ENCODE measurements at regions of chr6 and their contacts with region 1.

Region 1: DNA sequence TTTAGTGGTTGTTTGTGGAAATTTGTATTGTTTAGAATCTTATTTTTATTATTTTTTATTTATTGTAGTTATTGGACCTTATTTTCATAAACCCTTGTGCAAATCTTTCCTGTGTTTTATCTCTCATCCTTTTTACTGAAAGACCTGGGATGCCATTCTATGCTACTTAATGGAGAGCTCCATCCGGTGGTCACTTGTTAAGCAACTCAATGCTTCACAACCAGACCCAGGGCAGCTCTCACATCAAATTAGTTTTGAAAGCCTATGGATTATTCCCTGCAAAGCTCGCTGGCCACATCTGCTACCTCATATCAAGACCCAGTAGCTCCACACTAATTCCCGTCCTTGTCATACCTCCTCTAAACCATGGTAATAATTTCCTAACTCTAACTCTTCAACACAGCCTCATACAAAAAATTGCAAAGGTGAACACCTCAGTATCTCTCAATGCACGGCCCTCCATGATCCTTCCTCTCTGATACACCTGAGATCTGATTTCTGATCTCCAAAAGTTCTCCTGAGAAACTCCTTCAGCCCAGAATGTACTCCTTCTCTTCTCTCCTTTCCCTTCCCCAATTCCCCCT is 296.6 kb upstream of the MANEA start:
- H3K4me3 ChIP-seq: no peak overlapping the region
- H3K27ac ChIP-seq: no peak overlapping the region
- H3K4me1 ChIP-seq: no peaks in the 10 kb centered on the region
- CTCF ChIP-seq: no peak

Region 2: GRCh38 chr6:95203153-95203754 is 77.5 kb before region 1 on chr6:
- CTCF ChIA-PET with region 1: interaction called, 11 read pairs
- POLR2A ChIA-PET with region 1: no interaction called
- H3K4me3 ChIP-seq: no peak overlapping the region
- H3K27ac ChIP-seq: no peak overlapping the region
- H3K4me1 ChIP-seq: no peaks in the 10 kb centered on the region
- CTCF ChIP-seq: no peak

Region 3: DNA sequence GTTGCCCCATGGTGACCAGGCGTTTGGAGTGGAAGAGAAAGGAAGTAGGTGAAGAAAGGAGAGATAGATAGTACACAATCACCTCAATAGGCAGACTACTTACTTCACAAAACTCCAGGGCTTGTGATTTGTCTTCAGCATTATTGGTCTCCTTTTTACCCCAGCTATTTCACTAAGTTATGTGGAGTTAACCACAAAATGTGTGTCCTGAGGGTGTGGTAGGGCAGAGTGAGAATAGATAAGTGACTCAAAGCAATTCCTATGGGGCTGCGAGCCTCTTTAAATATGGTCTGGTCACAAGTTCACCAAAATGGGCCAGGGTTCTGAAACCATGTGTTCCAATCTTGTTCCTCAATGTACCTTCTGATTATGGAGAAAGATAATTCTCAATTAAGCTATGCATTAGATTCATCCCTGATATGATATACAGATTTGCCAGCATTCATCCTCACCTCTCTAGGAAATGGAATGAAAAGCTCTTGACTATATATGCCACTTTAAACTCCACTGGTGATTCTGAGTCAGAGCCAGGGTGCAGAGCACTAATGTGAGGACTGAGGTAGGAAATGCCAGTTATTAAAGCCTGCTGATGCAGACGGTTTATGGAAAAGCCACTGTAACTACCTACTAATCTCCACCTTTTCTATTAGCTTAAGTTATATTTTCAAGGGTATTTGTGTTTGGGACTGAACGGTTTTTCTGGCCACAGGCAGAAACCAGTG is 14.1 kb before region 1 on chr6:
- CTCF ChIA-PET with region 1: interaction called, 11 read pairs
- POLR2A ChIA-PET with region 1: no interaction called
- H3K4me3 ChIP-seq: no peak overlapping the region
- H3K27ac ChIP-seq: no peak overlapping the region
- H3K4me1 ChIP-seq: no peaks in the 10 kb centered on the region
- CTCF ChIP-seq: no peak

Region 4: GRCh38 chr6:95448208-95448607 is 167.4 kb after region 1 on chr6:
- CTCF ChIA-PET with region 1: no interaction called
- POLR2A ChIA-PET with region 1: no interaction called
- H3K4me3 ChIP-seq: no peak overlapping the region
- H3K27ac ChIP-seq: no peak overlapping the region
- H3K4me1 ChIP-seq: no peaks in the 10 kb centered on the region
- CTCF ChIP-seq: no peak

Measured in HEK293 (cell line).